GM12878 (cell line): ENCODE measurements at regions of chr5 and their contacts with region 1.

Region 1: DNA sequence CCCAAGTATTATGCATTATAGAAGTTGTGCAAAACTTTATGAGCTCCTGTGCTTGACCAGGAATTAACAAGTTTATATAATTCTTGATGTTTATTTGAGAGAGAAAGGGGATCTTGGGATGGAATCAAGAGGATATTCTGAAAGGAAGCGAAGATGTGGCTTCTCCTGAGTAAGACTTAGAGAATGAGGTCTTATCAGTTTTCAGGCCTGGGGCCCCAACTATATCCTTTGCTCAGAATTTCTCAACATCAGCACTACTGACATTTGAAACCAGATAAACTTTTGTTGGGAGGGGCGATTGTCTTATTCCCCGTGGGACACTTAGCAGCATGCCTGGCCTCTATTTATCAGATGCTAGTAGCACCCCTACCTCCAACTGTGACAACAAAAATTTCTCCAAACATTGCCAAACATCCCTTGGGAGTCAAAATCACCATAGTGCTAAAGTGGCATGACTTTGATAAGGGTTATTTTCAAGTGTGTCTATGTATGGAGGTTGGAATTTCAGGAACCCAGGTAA is 567.7 kb downstream of the MAT2B start:
- DNase-seq: no peak
- ATAC-seq: no peak
- H3K4me3 ChIP-seq: no peak overlapping the region
- H3K27ac ChIP-seq: no peak overlapping the region
- H3K4me1 ChIP-seq: no peaks in the 10 kb centered on the region
- H3K27me3 ChIP-seq: no peaks in the 10 kb centered on the region
- CTCF ChIP-seq: no peak
- EP300 ChIP-seq: no peak
- POLR2A ChIP-seq: no peak
- RAD21 ChIP-seq: no peak

Region 2: DNA sequence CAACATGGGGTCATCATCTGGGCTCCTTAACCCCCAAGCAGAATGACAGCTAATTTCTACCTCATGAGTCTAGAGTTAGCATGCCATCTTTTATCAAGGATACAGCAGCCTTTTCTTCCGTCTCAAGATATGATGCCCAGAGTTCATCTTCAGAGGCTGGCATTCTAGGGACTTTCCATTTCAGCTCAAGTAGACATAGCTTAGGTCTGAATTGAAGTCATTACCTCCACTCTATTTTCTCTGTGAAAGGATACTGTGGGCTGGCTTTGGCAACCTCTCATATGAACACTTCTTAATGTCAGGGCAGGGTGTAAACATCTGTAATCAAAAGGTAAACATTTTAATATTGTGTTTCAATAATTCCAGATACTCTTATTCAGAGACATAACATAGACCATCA is 32.0 kb before region 1 on chr5:
- CTCF ChIA-PET with region 1: no interaction called
- POLR2A ChIA-PET with region 1: no interaction called
- RAD21 ChIA-PET with region 1: no interaction called
- SMC1A ChIA-PET with region 1: no interaction called
- in situ Hi-C with region 1: no loop called
- intact Hi-C with region 1: no loop called
- DNase-seq: no peak
- ATAC-seq: peak; percentile 80
- H3K4me3 ChIP-seq: no peak overlapping the region
- H3K27ac ChIP-seq: no peak overlapping the region
- H3K4me1 ChIP-seq: no peaks in the 10 kb centered on the region
- H3K27me3 ChIP-seq: no peaks in the 10 kb centered on the region
- CTCF ChIP-seq: no peak
- EP300 ChIP-seq: no peak
- POLR2A ChIP-seq: no peak
- RAD21 ChIP-seq: no peak

Region 3: DNA sequence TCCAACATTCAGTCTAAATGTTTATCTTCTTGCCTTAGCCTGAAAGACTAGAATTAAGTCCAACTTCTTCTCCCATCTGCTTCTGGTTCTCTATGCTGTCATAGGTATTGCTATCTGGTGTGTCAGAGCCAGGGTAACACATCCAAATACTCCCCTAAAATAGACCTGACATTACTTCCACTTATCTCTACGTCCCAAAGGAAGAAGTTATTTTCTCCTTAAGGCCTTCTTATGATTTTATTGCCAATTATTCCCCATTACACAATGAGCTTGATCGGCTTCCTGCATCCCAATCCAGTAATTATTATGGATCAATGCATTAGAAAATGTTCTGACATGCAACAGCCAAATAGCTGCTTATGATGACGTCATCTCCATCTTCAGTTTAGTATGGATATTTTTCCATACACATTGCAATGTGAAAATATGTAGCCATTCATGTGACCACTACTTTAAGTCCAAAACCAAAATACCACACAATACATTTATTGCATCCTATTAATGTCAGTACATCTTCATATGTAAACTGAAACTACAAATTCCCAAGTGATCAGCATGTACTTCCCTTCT is 12.2 kb before region 1 on chr5:
- CTCF ChIA-PET with region 1: interaction called, 6 read pairs
- POLR2A ChIA-PET with region 1: no interaction called
- RAD21 ChIA-PET with region 1: no interaction called
- SMC1A ChIA-PET with region 1: interaction called, 11 read pairs
- in situ Hi-C with region 1: no loop called
- intact Hi-C with region 1: no loop called
- DNase-seq: no peak
- ATAC-seq: no peak
- H3K4me3 ChIP-seq: no peak overlapping the region
- H3K27ac ChIP-seq: no peak overlapping the region
- H3K4me1 ChIP-seq: no peaks in the 10 kb centered on the region
- H3K27me3 ChIP-seq: no peaks in the 10 kb centered on the region
- CTCF ChIP-seq: no peak
- EP300 ChIP-seq: no peak
- POLR2A ChIP-seq: no peak
- RAD21 ChIP-seq: no peak

Region 4: GRCh38 chr5:164153469-164154172 is 80.5 kb after region 1 on chr5:
- CTCF ChIA-PET with region 1: no interaction called
- POLR2A ChIA-PET with region 1: no interaction called
- RAD21 ChIA-PET with region 1: no interaction called
- SMC1A ChIA-PET with region 1: no interaction called
- in situ Hi-C with region 1: no loop called
- intact Hi-C with region 1: no loop called
- DNase-seq: no peak
- ATAC-seq: no peak
- H3K4me3 ChIP-seq: no peak overlapping the region
- H3K27ac ChIP-seq: no peak overlapping the region
- H3K4me1 ChIP-seq: no peaks in the 10 kb centered on the region
- H3K27me3 ChIP-seq: no peaks in the 10 kb centered on the region
- CTCF ChIP-seq: no peak
- EP300 ChIP-seq: no peak
- POLR2A ChIP-seq: no peak
- RAD21 ChIP-seq: no peak